ENCODE measurements at regions of chr19 and their contacts with region 1.

Region 1: GRCh38 chr19:19488875-19489690 is 26.3 kb downstream of the TSSK6 start:
- DNase-seq: peak; percentile 95
- ATAC-seq: peak; percentile 93
- H3K4me3 Mint-ChIP-seq: peak overlapping the region; percentile 43
- H3K27ac Mint-ChIP-seq: peak overlapping the region; percentile 97
- H3K4me1 Mint-ChIP-seq: peaks cover 57% of the 10 kb centered on the region
- H3K27me3 Mint-ChIP-seq: no peaks in the 10 kb centered on the region

Region 2: GRCh38 chr19:19138169-19138981 is 350.7 kb before region 1 on chr19 and contains the start of gene TMEM161A:
- CTCF ChIA-PET with region 1: no interaction called
- POLR2A ChIA-PET with region 1: no interaction called
- intact Hi-C with region 1: loop called in 1 of 2 experiments (anchors 1 kb)
- DNase-seq: peak; percentile 98
- ATAC-seq: peak; percentile 100
- H3K4me3 Mint-ChIP-seq: peak within 1 kb of the TSS; percentile 93
- H3K27ac Mint-ChIP-seq: peak within 1 kb of the TSS; percentile 95
- H3K4me1 Mint-ChIP-seq: peaks cover 30% of the 10 kb centered on the region
- H3K27me3 Mint-ChIP-seq: no peaks in the 10 kb centered on the region
- total RNA-seq, gene TMEM161A: 26.8 to 31.9 TPM

Region 3: GRCh38 chr19:19320362-19321142 is 168.5 kb before region 1 on chr19 and contains the starts of genes MAU2 and SUGP1:
- CTCF ChIA-PET with region 1: interaction called, 5 read pairs
- POLR2A ChIA-PET with region 1: no interaction called
- intact Hi-C with region 1: loop called (anchors 1 kb)
- DNase-seq: peak; percentile 96
- ATAC-seq: peak; percentile 93
- H3K4me3 Mint-ChIP-seq: peak within 1 kb of the TSS; percentile 93
- H3K27ac Mint-ChIP-seq: peak within 1 kb of the TSS; percentile 100
- H3K4me1 Mint-ChIP-seq: peaks cover 39% of the 10 kb centered on the region
- H3K27me3 Mint-ChIP-seq: no peaks in the 10 kb centered on the region
- total RNA-seq, gene MAU2: 33.3 to 45.7 TPM
- total RNA-seq, gene SUGP1: 49.4 to 62.0 TPM

Region 4: DNA sequence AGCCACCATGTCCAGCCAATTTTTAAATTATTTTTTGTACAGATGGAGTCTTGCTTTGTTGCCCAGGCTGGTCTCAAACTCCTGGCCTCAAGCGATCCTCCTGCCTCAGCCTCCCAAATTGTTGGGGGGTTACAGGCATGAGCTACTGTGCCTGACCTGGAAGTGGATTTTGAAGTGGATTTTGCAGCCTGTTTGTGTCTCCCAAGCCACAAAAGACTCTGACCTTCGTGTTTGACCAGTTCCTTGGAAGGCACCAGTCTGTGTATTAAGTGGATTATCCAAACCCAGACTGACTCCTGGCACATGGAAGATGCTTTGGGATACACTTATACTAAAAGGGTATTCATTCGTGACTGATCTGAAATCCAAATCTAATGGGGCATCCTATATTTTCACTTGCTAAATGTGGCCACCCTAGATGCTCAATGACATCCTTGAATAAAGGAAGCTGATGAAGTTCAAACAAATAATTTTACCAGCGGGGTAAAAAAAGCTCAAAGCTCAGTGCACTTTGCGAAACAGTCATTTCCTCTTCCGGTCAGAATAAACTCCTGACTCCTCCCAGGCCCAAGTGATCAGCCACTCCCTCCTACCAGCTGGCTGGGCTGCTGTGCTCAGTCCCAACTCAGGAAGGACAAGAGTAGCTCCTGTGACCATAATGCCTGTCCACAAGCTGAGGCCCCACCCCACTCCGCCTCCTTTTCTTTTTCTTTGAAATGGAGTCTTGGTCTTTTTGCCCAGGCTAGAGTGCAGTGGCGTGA is 116.2 kb before region 1 on chr19:
- CTCF ChIA-PET with region 1: interaction called, 17 read pairs
- POLR2A ChIA-PET with region 1: no interaction called
- intact Hi-C with region 1: no loop called
- DNase-seq: peak; percentile 56
- ATAC-seq: peak; percentile 94
- H3K4me3 Mint-ChIP-seq: peak overlapping the region; percentile 45
- H3K27ac Mint-ChIP-seq: peak overlapping the region; percentile 92
- H3K4me1 Mint-ChIP-seq: peaks cover 6% of the 10 kb centered on the region
- H3K27me3 Mint-ChIP-seq: no peaks in the 10 kb centered on the region

Region 5: DNA sequence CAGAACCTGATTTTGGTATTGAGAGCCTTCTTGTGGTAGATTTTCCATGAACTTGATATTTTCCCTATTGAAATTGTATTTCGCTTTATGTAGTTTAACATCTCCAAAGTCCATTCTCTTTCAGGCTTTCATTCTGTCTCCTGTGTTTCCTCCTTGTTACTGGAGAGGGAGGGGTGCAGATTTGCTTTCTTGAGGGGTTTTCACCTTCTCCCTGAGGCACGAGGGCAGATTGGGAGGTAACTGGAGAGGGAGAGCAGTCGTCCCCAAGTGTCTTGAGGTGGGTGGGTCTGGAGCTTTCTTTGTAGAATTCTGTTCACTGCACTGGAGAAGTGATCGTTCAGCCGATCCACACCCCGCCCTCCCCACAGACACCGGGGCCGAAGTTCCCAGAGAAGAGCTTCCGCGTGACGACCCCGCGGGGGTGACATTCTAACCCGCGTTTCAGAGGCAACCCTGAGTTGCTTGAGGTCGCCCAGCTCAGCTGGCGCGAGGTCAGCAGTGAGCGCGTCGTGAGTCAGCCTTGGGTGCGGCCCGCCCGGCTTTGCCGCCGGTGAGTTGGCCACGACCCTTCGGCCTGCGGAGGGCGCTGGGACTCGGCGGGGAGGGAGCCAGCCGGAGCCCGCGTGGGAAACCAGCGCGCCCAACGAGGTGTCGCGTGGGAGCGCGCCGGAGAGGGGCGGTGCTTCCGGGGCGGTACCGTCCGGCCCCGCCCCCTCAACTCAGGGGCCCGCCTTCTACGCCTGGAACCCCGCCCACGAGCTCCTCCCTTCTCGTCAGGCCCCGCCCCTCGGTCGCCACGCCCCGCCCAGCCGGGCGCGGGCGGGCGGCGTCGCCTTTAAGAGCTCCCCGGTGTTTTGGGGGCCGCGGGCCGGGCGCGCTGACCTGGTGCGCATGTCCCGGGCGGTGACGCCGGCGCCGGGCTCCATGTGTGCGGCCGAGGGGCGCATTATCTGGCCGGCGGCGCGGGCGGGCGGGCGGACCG is 83.9 kb before region 1 on chr19 and contains the start of gene GATAD2A:
- CTCF ChIA-PET with region 1: interaction called, 16 read pairs
- POLR2A ChIA-PET with region 1: interaction called, 7 read pairs
- intact Hi-C with region 1: loop called (anchors 1 kb)
- DNase-seq: peak; percentile 96
- ATAC-seq: peak; percentile 74
- H3K4me3 Mint-ChIP-seq: peak within 1 kb of the TSS; percentile 91
- H3K27ac Mint-ChIP-seq: peak within 1 kb of the TSS; percentile 95
- H3K4me1 Mint-ChIP-seq: peaks cover 69% of the 10 kb centered on the region
- H3K27me3 Mint-ChIP-seq: no peaks in the 10 kb centered on the region
- total RNA-seq, gene GATAD2A: 123 to 139 TPM

Region 6: DNA sequence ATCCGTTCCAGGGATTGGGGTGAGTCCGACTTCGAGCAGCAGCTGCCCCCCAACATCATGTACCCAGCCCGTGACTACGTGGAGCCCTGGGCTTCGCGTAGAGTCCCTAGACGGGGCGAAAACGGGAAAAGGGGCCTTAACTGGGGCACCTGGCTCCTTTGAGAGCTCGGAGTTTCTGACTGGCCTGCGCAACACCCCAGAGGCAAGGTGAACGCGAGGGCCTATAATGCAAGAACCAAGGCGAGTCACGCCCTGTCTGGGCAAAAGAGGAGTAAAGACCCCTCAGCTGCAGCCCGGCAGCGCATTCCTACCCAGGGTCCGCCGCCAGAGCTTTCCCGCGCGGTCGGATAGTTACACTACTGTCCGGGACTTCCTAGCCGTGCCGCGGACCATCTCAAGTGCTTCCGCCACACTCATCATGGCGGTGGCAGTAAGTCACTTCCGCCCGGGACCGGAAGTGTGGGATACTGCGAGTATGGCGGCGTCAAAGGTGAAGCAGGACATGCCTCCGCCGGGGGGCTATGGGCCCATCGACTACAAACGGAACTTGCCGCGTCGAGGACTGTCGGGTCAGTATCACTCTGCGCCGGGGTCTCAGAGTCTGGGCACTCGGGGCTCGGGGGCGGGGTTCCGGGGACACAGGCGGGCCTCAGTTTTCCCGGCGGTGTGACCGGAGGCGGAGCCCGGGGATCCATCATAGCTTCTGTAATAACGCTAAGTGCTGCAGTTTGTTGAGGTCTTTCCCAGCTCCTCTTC is 26.9 kb after region 1 on chr19 and contains the start of gene NDUFA13:
- CTCF ChIA-PET with region 1: interaction called, 11 read pairs
- POLR2A ChIA-PET with region 1: interaction called, 4 read pairs
- intact Hi-C with region 1: no loop called
- DNase-seq: peak; percentile 95
- ATAC-seq: peak; percentile 94
- H3K4me3 Mint-ChIP-seq: peak within 1 kb of the TSS; percentile 83
- H3K27ac Mint-ChIP-seq: peak within 1 kb of the TSS; percentile 92
- H3K4me1 Mint-ChIP-seq: peaks cover 25% of the 10 kb centered on the region
- H3K27me3 Mint-ChIP-seq: no peaks in the 10 kb centered on the region
- total RNA-seq, gene NDUFA13: 310 to 323 TPM

Region 7: DNA sequence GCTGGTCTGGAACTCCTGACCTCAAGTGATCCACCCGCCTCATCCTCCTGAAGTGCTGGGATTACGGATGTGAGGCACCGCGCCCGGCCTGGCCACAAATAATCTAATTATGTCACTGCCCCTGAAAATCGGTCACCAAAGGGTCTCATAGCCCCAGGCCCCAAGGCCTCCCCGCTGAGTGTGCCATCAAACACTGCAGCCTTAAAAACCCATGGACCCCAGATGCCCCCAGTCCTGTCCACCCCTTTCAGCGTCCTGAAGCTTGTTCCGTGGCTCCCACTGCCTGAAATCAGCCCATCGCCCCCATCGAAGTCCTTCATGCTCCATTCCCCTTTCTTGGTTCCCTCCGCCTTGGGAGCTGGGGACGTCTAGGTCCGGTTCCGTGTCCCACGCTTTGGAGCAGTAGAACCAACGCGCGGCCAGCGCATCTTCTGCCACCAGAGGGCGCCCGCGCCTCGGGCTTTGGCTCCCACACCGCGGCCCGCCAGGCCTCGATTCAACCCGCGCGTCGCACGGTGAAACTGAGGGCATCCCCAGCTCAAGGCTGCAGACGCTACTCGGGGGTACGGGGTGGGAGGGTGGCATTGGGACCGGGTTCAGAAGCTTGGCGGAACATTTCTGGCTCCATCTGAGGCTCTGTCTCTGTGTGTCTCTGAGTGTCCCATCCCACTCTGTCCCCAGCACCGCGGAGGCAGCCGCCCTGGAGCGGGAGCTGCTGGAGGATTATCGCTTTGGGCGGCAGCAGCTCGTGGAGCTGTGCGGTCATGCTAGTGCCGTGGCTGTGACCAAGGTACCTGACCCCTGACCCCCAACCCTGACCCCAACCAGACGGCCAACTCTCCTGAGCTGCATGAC is 43.1 kb after region 1 on chr19:
- CTCF ChIA-PET with region 1: no interaction called
- POLR2A ChIA-PET with region 1: no interaction called
- intact Hi-C with region 1: no loop called
- DNase-seq: peak; percentile 92
- ATAC-seq: peak; percentile 87
- H3K4me3 Mint-ChIP-seq: no peak overlapping the region
- H3K27ac Mint-ChIP-seq: no peak overlapping the region
- H3K4me1 Mint-ChIP-seq: peaks cover 10% of the 10 kb centered on the region
- H3K27me3 Mint-ChIP-seq: no peaks in the 10 kb centered on the region

Measured in activated CD4-positive, alpha-beta T cell treated with anti-CD3 and anti-CD28 coated beads for 36 hours (primary cell).